Right cardiac atrium (tissue), 5 donors: ENCODE measurements at regions of chr2 and their contacts with region 1.

Region 1: DNA sequence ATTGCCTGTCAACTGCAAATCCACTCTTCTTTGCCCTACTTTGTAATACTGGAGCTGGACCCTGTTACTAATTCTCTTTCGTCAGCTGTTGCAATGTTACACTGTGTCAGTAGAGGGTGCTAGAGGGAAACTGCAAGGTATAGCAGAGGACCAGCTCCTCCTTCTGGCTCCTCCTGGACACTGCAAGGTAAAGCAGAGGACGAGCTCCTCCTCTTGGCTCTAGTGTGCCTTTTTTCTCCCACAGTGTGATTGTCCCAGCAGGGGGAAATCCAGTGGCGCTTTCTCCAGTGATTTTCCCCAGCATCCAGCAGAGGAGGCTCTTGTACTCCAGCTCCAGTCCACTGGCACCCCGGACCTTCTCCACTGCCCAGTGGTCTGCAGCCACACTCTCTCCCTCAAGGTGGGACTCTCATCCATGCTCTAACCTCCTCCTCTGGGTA is 95.6 kb downstream of the CAPN13 start:
- DNase-seq: peak; percentile 79 to 92 (median 87)
- ATAC-seq: peak; percentile 70 to 72
- H3K4me3 ChIP-seq: no peak overlapping the region
- H3K27ac ChIP-seq: no peak overlapping the region
- H3K4me1 ChIP-seq: no peaks in the 10 kb centered on the region
- H3K27me3 ChIP-seq: no peaks in the 10 kb centered on the region

Region 2: DNA sequence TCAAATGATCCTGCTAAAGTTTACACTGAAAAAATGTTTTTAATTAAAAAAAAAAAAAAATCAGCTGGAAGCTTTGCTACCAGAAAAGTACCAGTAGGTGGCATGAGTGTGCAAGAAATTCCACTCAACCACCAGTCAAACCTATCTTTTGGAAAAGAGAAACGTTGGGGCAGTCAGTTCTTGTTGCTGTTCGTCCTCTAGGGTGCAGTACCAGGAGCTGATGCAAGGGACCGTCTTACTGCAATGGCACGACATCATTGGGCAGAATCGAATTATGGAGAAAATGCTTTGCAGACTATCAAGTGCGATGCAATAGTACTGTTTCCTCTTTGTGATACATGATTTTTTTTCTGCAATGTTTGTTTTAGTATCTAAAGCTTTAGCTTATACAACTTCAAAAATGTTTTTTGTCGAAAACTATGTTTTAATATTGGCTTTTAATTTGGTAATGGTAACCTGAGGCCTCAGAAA is 546.6 kb before region 1 on chr2:
- intact Hi-C with region 1: loop called (anchors 2 to 10 kb)
- DNase-seq: peak in 1 of 3 donors; percentile 63
- ATAC-seq: peak; percentile 85 to 87
- H3K4me3 ChIP-seq: no peak overlapping the region
- H3K27ac ChIP-seq: no peak overlapping the region
- H3K4me1 ChIP-seq: no peaks in the 10 kb centered on the region
- H3K27me3 ChIP-seq: no peaks in the 10 kb centered on the region

Region 3: GRCh38 chr2:30208452-30208851 is 503.2 kb before region 1 on chr2:
- intact Hi-C with region 1: loop called (anchors 2 to 10 kb)
- DNase-seq: peak; percentile 53 to 79 (median 66)
- ATAC-seq: peak; percentile 91 to 95
- H3K4me3 ChIP-seq: no peak overlapping the region
- H3K27ac ChIP-seq: no peak overlapping the region
- H3K4me1 ChIP-seq: peaks cover 2% of the 10 kb centered on the region
- H3K27me3 ChIP-seq: no peaks in the 10 kb centered on the region

Region 4: DNA sequence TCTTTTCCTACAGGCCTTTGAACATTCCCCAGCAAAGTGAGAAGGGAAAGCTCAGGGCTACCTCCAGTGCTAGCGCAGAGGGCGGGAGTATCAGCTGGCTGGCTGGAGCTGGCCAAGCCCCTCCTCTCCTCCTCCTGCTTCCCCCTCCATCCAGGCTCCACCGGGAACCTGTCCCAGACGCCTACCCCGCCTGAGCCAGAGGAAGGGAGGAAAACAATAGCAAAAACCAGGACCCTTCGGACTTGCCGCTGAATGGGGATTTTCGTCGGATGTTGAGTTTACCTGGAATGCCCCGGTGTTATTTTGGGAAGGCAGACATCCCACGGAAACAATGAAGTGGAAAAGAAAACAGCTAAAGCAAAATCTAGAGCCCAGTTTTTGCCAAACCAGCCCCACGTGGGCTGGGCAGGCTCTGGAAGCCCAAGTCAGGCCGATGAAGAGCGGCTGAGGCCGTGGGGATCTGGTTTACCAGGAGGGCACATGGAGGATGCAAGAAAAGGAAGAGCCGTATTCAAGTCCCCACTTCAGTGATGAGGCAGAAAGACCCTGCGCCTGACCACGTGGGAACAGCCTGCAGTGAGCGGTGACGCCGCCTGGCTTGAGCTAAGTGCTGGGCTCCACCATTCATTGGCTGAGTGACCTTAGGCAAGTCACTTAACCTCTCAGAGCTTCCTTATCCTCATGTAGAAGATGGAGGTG is 365.0 kb before region 1 on chr2:
- intact Hi-C with region 1: loop called in 1 of 4 experiments (anchors 10 kb)
- DNase-seq: peak; percentile 75 to 91 (median 89)
- ATAC-seq: peak; percentile 97 to 98
- H3K4me3 ChIP-seq: peak overlapping the region; percentile 37
- H3K27ac ChIP-seq: peak overlapping the region; percentile 79
- H3K4me1 ChIP-seq: peaks cover 15% of the 10 kb centered on the region
- H3K27me3 ChIP-seq: no peaks in the 10 kb centered on the region

Region 5: DNA sequence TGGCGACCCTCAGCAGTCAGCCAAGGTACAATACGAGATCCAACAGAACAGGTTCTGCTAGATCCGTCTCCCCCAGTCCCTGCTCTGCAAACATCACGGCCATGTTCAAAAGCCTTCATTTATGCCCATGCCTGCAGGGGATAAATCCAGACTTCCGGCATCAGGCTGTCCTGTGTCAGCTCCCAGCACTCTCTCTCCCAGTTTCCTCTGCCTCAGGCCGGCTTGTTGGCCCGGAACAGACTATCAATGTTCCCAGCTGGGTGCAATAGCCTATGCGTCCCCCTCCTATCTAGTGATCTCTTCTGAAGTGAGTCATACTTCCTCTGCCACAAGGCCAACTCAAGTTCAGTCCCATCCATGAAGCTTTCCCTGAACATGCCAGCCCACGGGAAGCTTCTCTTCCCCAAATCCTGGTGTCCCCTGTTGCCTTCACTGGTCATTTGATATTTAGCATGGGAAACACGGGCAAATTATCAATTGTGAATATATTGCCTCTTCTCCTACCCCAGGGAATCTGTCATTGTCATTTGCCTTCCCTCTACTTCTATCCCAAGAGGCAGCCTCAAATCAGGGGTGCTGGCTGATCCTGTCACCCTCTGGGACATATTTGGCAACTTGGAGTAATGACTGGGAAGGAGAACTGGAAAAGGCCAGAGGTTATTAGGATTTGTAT is 44.5 kb after region 1 on chr2:
- intact Hi-C with region 1: no loop called
- DNase-seq: no peak
- ATAC-seq: no peak
- H3K4me3 ChIP-seq: no peak overlapping the region
- H3K27ac ChIP-seq: no peak overlapping the region
- H3K4me1 ChIP-seq: no peaks in the 10 kb centered on the region
- H3K27me3 ChIP-seq: no peaks in the 10 kb centered on the region

Region 6: DNA sequence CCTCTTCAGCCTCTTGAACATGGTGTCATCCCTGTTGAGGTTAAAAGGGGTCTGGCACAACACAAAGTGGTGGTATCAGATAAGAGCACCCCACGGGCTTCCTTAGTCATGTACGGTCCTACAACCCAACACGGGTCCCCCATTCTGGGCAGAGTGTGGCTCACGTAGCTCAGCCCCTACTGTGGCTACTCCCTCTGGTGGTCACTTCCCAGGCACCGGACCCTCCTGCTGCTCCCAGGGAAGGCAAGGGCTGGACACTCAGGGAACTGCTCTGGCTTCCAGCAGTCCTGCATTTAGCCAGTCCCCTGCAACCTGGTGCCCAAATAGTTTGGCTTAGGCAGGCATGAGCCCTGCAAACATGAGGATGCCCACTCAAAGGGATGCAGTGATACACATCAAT is 368.0 kb after region 1 on chr2:
- intact Hi-C with region 1: no loop called
- DNase-seq: peak in 1 of 3 donors; percentile 15
- ATAC-seq: no peak
- H3K4me3 ChIP-seq: no peak overlapping the region
- H3K27ac ChIP-seq: no peak overlapping the region
- H3K4me1 ChIP-seq: no peaks in the 10 kb centered on the region
- H3K27me3 ChIP-seq: no peaks in the 10 kb centered on the region

Region 7: GRCh38 chr2:31170071-31170698 is 458.5 kb after region 1 on chr2:
- intact Hi-C with region 1: loop called in 3 of 4 experiments (anchors 2 to 10 kb)
- DNase-seq: peak in 2 of 3 donors; percentile 47 to 62
- ATAC-seq: peak; percentile 75 to 85
- H3K4me3 ChIP-seq: no peak overlapping the region
- H3K27ac ChIP-seq: no peak overlapping the region
- H3K4me1 ChIP-seq: no peaks in the 10 kb centered on the region
- H3K27me3 ChIP-seq: no peaks in the 10 kb centered on the region

Region 8: DNA sequence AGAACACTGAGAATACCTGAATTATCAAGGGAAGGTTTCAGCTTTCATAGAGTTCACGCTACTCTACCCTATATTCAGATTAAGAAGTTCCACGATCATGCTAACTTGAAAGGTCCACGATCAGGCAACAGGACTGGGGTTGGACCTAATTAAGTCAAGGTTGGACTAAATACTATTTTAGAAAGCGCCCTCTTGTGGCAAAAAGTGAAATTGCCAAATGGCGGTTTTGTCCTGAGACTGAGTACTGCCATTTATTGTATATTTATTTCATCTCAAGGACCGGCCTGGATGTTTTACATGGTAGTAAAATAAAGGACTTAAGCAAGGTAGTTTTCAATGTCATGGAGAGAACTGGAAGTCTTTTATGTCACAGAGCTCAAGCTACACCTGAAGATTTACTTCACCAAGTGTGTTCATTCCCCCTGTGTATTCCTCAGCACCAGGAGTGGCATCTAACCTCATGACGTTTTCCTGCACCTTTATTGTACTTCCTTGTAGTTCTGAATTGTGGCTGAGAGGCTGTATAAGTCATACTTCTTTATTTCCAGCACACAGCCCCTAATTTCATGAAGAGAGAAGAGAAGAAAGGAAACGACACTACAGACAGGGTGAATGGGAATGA is 812.3 kb after region 1 on chr2:
- intact Hi-C with region 1: loop called in 3 of 4 experiments (anchors 10 kb)
- DNase-seq: no peak
- ATAC-seq: no peak
- H3K4me3 ChIP-seq: no peak overlapping the region
- H3K27ac ChIP-seq: no peak overlapping the region
- H3K4me1 ChIP-seq: no peaks in the 10 kb centered on the region
- H3K27me3 ChIP-seq: no peaks in the 10 kb centered on the region